AG04449 (cell line): ENCODE measurements at regions of chr18 and their contacts with region 1.

Region 1: GRCh38 chr18:46660955-46661749 is 4.1 kb upstream of the LOXHD1 start:
- DNase-seq: no peak
- H3K4me3 ChIP-seq: no peak overlapping the region
- CTCF ChIP-seq: no peak

Region 2: DNA sequence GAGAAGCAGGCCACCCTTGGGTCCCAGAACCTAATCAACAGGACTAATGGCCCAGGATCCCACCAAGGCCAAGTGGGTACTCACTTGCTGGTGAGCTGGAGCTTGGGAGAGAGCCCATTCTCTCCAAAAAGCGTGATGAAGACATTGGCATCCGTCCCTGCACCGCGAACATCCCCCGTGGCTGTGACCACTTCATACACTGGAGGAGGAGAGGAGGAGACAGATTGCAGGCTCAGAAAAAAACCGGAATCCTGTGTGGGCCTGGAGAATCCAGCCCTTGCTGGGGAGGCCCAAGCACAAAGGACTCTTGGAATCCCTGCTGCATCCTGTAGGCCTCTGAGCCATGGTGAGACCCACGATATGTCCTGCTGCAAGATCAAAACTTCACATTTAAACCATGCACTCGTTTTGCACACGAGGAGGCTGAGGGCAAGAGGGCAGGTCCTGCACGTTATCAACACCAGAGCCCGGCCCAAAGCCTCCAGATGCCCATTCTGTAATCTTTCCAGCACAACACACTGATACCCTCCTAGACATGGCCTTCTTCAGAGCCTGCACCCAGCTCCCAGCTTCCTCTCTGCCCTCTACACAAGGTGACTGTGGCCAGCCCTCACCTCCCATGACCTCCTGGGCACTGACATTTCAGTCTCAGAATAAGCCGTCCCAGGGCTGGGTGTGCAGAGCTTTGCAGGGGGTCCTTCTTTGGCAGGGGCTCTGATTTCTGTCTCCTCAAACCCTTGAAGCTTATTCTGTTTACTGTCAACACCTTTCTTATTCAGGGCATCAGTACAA is 11.9 kb before region 1 on chr18:
- CTCF ChIA-PET with region 1: interaction called, 22 read pairs
- POLR2A ChIA-PET with region 1: no interaction called
- DNase-seq: no peak
- H3K4me3 ChIP-seq: no peak overlapping the region
- CTCF ChIP-seq: no peak

Region 3: GRCh38 chr18:46672062-46672970 is 11.2 kb after region 1 on chr18:
- CTCF ChIA-PET with region 1: interaction called, 11 read pairs
- POLR2A ChIA-PET with region 1: interaction called, 3 read pairs
- DNase-seq: no peak
- H3K4me3 ChIP-seq: no peak overlapping the region
- CTCF ChIP-seq: no peak

Region 4: GRCh38 chr18:46917108-46917802 is 256.1 kb after region 1 on chr18 and contains the starts of genes KATNAL2 and PIAS2:
- CTCF ChIA-PET with region 1: no interaction called
- POLR2A ChIA-PET with region 1: no interaction called
- DNase-seq: no peak
- H3K4me3 ChIP-seq: peak within 1 kb of the TSS; percentile 86
- CTCF ChIP-seq: no peak